ENCODE measurements at regions of chr1 and their contacts with region 1.

Region 1: GRCh38 chr1:206419250-206419649 is 51.0 kb upstream of the IKBKE start:
- DNase-seq: peak; percentile 75
- H3K4me3 ChIP-seq: no peak overlapping the region
- H3K27ac ChIP-seq: no peak overlapping the region
- H3K4me1 ChIP-seq: peaks cover 0 to 27% (median 11%) of the 10 kb centered on the region in 4 donors
- H3K27me3 ChIP-seq: no peaks in the 10 kb centered on the region
- CTCF ChIP-seq: peak in 1 of 5 experiments; percentile 45
- EP300 ChIP-seq: no peak
- POLR2A ChIP-seq: no peak

Region 2: GRCh38 chr1:206445116-206445515 is 25.9 kb after region 1 on chr1:
- in situ Hi-C with region 1: no loop called
- intact Hi-C with region 1: loop called (anchors 1 kb)
- DNase-seq: no peak
- H3K4me3 ChIP-seq: no peak overlapping the region
- H3K27ac ChIP-seq: no peak overlapping the region
- H3K4me1 ChIP-seq: peaks cover 0 to 7% (median 0%) of the 10 kb centered on the region in 4 donors
- H3K27me3 ChIP-seq: no peaks in the 10 kb centered on the region
- CTCF ChIP-seq: no peak
- EP300 ChIP-seq: no peak
- POLR2A ChIP-seq: no peak